ENCODE measurements at regions of chr11 and their contacts with region 1.

Region 1: GRCh38 chr11:12888525-12889158 is 120.5 kb upstream of the RASSF10 start:
- DNase-seq: peak; percentile 77
- H3K4me3 Mint-ChIP-seq: no peak overlapping the region
- H3K27ac Mint-ChIP-seq: no peak overlapping the region
- H3K4me1 Mint-ChIP-seq: no peaks in the 10 kb centered on the region
- H3K27me3 Mint-ChIP-seq: peaks cover 3% of the 10 kb centered on the region

Region 2: DNA sequence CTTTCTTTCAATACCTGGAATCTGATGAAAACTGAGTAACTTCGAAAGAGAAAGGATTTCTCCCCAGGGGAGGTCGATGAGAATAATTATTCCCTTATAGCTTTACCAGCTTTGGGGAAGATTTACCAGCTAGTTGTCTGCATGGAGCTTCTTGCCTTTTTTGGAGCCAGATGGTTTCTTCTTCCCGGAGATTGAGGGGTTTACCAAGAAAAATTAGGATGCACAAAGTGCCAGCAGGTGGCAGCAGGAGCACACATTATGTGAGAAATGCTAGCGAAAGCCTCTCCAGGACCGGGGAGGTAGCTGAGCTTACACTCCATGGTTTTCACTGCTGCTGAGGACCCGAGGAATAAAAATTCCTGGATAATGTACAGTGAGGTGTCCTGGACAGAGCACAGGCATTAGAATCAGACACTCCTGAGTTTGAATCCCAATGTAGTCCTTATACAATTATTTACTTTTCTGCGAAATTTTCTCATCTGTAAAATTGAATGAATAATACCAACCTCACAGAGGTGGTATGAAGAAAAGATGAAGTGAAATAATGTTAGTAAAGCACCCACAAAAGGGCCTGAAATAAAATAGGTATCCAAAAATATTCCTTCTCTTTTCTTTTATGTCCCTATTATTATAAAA is 557.3 kb before region 1 on chr11:
- CTCF ChIA-PET with region 1: interaction called, 112 read pairs
- POLR2A ChIA-PET with region 1: no interaction called
- intact Hi-C with region 1: loop called (anchors 1 kb)
- DNase-seq: peak; percentile 81
- H3K4me3 Mint-ChIP-seq: no peak overlapping the region
- H3K27ac Mint-ChIP-seq: no peak overlapping the region
- H3K4me1 Mint-ChIP-seq: peaks cover 5% of the 10 kb centered on the region
- H3K27me3 Mint-ChIP-seq: no peaks in the 10 kb centered on the region

Region 3: DNA sequence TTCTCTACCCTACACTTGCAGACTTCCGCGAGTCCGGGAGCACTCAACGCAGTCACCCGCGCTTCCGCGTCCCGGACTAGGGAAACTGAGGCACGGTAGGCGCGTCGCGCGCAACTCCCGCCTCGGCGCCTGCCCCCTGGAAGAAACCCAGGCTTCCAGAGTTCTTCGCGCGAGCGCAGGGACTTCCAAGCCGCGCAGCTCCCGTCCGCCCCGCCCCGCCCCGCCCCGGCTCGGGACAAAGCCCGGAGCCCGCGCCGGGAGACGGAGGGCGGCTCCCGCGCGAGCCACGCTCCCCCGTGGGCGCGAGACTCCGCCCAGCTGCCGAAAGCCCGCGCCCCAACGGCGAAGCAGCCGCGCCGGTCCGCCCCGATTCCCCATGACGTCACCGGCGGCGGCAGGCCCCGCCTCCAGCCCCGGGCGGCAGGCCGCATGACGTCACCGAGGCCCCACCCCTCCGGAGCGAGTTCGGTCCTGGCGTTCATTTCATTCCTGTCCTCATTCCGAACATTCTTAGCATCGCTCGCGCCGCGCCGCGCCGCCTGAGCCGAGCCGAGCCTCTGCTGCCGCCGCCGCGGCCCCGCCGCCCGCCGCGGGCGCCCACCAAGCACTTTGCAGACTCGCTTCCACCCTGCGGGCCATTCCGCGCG is 214.6 kb before region 1 on chr11 and contains the start of gene TEAD1:
- CTCF ChIA-PET with region 1: interaction called, 4 read pairs
- POLR2A ChIA-PET with region 1: no interaction called
- intact Hi-C with region 1: loop called (anchors 5 kb)
- DNase-seq: peak; percentile 91
- H3K4me3 Mint-ChIP-seq: peak within 1 kb of the TSS; percentile 76
- H3K27ac Mint-ChIP-seq: no peak within 1 kb of the TSS
- H3K4me1 Mint-ChIP-seq: peaks cover 8% of the 10 kb centered on the region
- H3K27me3 Mint-ChIP-seq: peaks cover 61% of the 10 kb centered on the region
- total RNA-seq, gene TEAD1: 1.0 to 1.5 TPM

Region 4: DNA sequence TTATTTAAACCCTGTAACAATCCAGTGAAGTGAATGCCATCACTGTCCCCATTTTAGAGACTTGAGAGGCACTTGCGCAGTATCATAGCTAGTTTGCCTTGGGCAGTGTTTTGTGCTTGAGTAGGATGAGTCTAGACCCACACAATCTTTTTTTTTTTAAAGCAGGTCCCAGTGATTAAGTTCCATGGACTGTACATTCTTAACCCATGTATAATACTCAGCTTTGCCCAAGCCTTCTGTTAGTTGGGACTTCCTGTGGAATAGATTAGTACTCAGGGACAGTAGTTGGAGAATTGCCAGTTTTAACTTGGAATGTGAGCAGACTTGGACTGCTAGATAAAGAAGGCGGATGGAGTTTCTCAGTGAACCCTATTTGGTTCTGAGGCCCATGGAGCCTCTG is 11.9 kb after region 1 on chr11:
- CTCF ChIA-PET with region 1: interaction called, 30 read pairs
- POLR2A ChIA-PET with region 1: no interaction called
- intact Hi-C with region 1: no loop called
- DNase-seq: no peak
- H3K4me3 Mint-ChIP-seq: no peak overlapping the region
- H3K27ac Mint-ChIP-seq: no peak overlapping the region
- H3K4me1 Mint-ChIP-seq: peaks cover 3% of the 10 kb centered on the region
- H3K27me3 Mint-ChIP-seq: no peaks in the 10 kb centered on the region

Region 5: DNA sequence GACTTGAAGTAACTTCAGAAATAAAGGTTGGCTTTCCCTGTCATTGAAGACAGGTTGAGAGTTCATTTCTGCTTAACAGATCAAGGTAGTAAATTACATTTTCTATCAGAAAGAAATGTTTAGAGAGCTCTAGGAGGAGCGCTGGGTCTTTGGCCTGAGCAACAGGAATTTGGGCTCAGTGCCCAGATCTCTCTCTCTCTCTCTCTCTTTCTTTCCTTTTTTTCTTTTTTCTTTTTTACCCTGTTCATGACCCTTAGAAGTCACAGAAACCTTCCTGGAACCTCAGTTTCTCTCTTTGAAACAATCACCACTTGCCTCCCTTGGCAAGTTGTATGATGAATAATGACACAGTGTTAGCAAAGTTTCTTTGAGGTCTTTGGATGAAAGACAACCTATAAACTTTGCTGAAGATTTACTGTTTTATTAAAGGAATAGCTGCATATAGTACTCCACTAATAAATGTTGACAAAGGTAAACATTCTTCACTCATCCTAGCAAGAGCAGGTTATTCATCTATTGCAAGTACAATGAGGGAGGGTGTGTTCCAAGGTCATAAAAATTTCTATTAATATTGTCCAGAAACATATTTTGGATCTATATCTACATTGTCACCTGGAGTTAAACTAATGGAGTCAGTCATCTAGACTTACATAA is 85.0 kb after region 1 on chr11:
- CTCF ChIA-PET with region 1: no interaction called
- POLR2A ChIA-PET with region 1: no interaction called
- intact Hi-C with region 1: no loop called
- DNase-seq: no peak
- H3K4me3 Mint-ChIP-seq: no peak overlapping the region
- H3K27ac Mint-ChIP-seq: no peak overlapping the region
- H3K4me1 Mint-ChIP-seq: no peaks in the 10 kb centered on the region
- H3K27me3 Mint-ChIP-seq: peaks cover 2% of the 10 kb centered on the region